Activated CD4-positive, alpha-beta T cell treated with anti-CD3 and anti-CD28 coated beads for 36 hours (primary cell): ENCODE measurements at regions of chr2 and their contacts with region 1.

Region 1: GRCh38 chr2:98713332-98714015 is 17.5 kb downstream of the MGAT4A start:
- DNase-seq: no peak
- ATAC-seq: no peak
- H3K4me3 Mint-ChIP-seq: no peak overlapping the region
- H3K27ac Mint-ChIP-seq: peak overlapping the region; percentile 51
- H3K4me1 Mint-ChIP-seq: peaks cover 94% of the 10 kb centered on the region
- H3K27me3 Mint-ChIP-seq: no peaks in the 10 kb centered on the region

Region 2: DNA sequence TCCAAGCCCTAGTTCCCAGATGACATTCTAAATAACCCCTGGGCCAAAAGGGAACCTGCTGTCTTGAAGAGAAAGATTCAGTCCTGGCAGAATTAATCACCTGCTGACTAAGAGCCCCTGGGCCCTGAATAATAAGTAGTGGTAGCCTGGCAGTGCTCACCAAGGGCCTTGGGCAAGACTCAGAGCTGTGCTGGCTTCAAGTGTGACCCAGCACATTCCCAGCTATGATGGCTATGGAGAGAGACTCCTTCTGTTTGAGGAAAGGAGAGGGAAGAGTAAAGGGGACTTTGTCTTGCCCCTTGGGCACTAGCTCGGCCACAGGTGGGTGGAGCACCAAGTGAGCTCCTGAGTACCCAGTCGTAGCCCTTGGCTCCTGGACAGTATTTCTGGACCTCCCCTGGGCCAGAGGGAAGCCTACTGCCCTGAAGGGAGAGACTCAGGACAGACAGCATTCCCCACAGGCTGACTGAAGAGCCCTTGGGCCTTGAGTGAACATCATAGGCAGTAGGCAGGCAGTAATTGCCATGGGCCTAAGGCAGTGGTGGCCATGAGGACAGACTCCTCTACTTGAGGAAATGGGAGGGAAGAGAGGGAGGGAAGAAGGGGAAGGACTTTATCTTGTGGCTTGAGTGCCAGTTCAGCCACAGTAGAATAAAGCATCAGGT is 308.8 kb before region 1 on chr2:
- CTCF ChIA-PET with region 1: no interaction called
- POLR2A ChIA-PET with region 1: no interaction called
- intact Hi-C with region 1: no loop called
- DNase-seq: no peak
- ATAC-seq: no peak
- H3K4me3 Mint-ChIP-seq: no peak overlapping the region
- H3K27ac Mint-ChIP-seq: no peak overlapping the region
- H3K4me1 Mint-ChIP-seq: no peaks in the 10 kb centered on the region
- H3K27me3 Mint-ChIP-seq: peaks cover 8% of the 10 kb centered on the region

Region 3: DNA sequence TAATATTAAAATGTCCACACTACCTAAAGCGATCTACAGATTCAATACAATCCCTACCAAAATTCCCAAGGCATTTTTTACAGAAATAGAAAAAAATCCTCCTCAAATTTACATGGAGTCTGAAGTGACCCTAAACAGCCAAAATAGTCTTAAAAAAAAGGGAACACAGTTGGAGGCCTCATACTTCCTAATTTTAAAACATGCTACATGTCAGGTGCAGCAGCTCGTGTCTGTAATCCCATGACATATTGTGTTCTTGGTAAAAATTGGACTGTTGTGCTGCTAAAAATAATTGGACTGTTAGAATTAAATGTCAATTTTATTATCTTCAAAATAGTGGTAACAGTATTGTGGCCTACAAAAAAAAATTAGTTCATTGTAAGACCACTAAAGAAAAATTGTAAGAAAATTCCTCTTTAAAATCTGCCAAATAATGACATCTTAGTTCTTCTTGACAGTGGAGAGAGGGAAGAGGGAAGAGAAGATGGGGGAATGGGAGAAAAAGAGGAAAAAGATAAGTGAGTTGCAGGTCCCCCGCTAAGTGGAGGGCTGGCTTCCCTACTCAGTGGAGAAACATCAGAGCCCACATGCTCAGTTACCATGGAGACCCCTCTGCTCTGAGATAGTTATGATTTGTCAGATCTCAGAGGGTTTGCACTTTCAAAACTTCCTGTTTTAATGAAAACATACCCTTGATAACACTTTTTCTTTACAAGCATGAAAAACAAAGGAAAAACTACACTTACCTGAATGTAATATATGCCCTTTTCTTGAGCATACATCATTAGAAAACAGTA is 58.6 kb before region 1 on chr2:
- CTCF ChIA-PET with region 1: interaction called, 7 read pairs
- POLR2A ChIA-PET with region 1: interaction called, 5 read pairs
- intact Hi-C with region 1: loop called in 1 of 2 experiments (anchors 5 kb)
- DNase-seq: peak; percentile 48
- ATAC-seq: peak; percentile 38
- H3K4me3 Mint-ChIP-seq: peak overlapping the region; percentile 42
- H3K27ac Mint-ChIP-seq: peak overlapping the region; percentile 72
- H3K4me1 Mint-ChIP-seq: peaks cover 80% of the 10 kb centered on the region
- H3K27me3 Mint-ChIP-seq: no peaks in the 10 kb centered on the region

Region 4: GRCh38 chr2:98691303-98691702 is 22.2 kb before region 1 on chr2:
- CTCF ChIA-PET with region 1: interaction called, 3 read pairs
- POLR2A ChIA-PET with region 1: no interaction called
- intact Hi-C with region 1: loop called in 1 of 2 experiments (anchors 2 kb)
- DNase-seq: no peak
- ATAC-seq: peak; percentile 43
- H3K4me3 Mint-ChIP-seq: peak overlapping the region; percentile 20
- H3K27ac Mint-ChIP-seq: peak overlapping the region; percentile 96
- H3K4me1 Mint-ChIP-seq: peaks cover 86% of the 10 kb centered on the region
- H3K27me3 Mint-ChIP-seq: no peaks in the 10 kb centered on the region

Region 5: GRCh38 chr2:98702858-98703620 is 10.4 kb before region 1 on chr2:
- CTCF ChIA-PET with region 1: interaction called, 15 read pairs
- POLR2A ChIA-PET with region 1: interaction called, 3 read pairs
- intact Hi-C with region 1: no loop called
- DNase-seq: no peak
- ATAC-seq: no peak
- H3K4me3 Mint-ChIP-seq: no peak overlapping the region
- H3K27ac Mint-ChIP-seq: peak overlapping the region; percentile 35
- H3K4me1 Mint-ChIP-seq: peaks cover 72% of the 10 kb centered on the region
- H3K27me3 Mint-ChIP-seq: no peaks in the 10 kb centered on the region

Region 6: GRCh38 chr2:98736464-98736889 is 23.0 kb after region 1 on chr2:
- CTCF ChIA-PET with region 1: interaction called, 4 read pairs
- POLR2A ChIA-PET with region 1: interaction called, 3 read pairs
- intact Hi-C with region 1: loop called in 1 of 2 experiments (anchors 2 kb)
- DNase-seq: peak; percentile 59
- ATAC-seq: peak; percentile 87
- H3K4me3 Mint-ChIP-seq: peak overlapping the region; percentile 34
- H3K27ac Mint-ChIP-seq: peak overlapping the region; percentile 55
- H3K4me1 Mint-ChIP-seq: peaks cover 68% of the 10 kb centered on the region
- H3K27me3 Mint-ChIP-seq: no peaks in the 10 kb centered on the region